ENCODE measurements at regions of chr12 and their contacts with region 1.

Region 1: DNA sequence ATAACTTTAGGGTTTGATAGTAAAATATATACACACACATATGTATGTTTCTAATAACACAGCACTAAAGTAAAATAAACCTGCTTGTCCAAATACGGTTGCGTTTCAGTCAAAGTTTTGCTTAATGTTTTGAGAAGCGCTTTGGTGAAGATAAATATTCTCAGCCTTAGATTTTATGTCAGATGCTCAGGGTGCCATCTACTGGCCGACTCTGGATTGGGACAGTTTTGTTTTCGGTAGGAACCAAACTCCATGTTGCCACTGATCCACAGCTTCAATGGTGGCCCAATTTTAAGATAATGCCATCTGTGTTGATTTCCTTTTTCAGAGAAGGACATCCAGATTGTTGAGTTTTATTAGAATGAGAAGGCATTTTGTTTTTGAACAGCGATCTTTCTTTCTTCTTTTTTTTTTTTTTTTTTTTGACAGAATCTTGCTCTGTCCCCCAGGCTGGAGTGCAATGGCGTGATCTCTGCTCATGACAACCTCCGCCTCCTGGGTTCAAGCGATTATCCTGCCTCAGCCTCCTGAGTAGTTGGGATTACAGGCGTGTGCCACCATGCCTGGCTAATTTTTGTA is 43.1 kb downstream of the LLPH start:
- DNase-seq: peak; percentile 55
- ATAC-seq: peak; percentile 63 to 65

Region 2: GRCh38 chr12:65556681-65557437 is 530.6 kb before region 1 on chr12:
- intact Hi-C with region 1: loop called in 1 of 2 experiments (anchors 2 kb)
- DNase-seq: peak; percentile 84
- ATAC-seq: peak; percentile 98

Region 3: GRCh38 chr12:65986047-65986446 is 101.4 kb before region 1 on chr12:
- intact Hi-C with region 1: loop called in 1 of 2 experiments (anchors 10 kb)
- DNase-seq: no peak
- ATAC-seq: no peak

Region 4: DNA sequence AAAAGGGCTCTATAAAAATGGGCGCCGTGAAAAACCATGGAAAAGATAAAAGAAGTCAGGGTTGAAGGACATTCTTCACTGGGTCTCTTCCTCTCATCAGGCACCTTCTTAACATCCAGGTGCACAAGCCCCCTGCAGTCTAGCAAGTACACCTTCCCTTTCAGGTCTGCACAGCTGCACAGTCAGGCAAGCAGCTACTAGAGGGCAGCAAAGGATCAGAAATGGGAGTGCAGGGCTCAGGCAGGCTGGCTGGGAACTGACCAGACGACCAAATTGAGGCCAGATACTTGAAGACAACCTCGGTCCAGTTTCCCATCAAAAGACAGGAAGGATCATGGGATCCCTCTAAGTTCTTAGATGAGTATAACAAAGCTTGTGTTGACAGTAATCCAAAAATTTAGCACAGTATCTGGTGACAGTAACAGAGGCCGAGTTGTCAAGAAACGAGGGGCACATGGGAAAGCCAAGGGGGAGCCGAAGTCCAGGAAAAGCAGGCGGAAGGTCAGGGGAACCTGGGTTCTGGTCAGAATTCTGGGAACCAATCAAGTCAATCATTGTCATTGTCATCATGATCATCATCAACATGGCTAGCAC is 601.5 kb after region 1 on chr12:
- intact Hi-C with region 1: no loop called
- DNase-seq: peak; percentile 20
- ATAC-seq: peak; percentile 78 to 86

Measured in left cardiac atrium (tissue), 4 donors.